ENCODE measurements at regions of chr2 and their contacts with region 1.

Region 1: GRCh38 chr2:111091811-111092211 is 28.9 kb upstream of the BCL2L11 start:
- DNase-seq: no peak
- ATAC-seq: no peak
- H3K4me3 ChIP-seq: no peak overlapping the region
- H3K27ac ChIP-seq: no peak overlapping the region
- H3K4me1 ChIP-seq: peaks cover 0 to 3% of the 10 kb centered on the region in 2 donors
- H3K27me3 ChIP-seq: no peaks in the 10 kb centered on the region
- CTCF ChIP-seq: no peak
- POLR2A ChIP-seq: no peak

Region 2: DNA sequence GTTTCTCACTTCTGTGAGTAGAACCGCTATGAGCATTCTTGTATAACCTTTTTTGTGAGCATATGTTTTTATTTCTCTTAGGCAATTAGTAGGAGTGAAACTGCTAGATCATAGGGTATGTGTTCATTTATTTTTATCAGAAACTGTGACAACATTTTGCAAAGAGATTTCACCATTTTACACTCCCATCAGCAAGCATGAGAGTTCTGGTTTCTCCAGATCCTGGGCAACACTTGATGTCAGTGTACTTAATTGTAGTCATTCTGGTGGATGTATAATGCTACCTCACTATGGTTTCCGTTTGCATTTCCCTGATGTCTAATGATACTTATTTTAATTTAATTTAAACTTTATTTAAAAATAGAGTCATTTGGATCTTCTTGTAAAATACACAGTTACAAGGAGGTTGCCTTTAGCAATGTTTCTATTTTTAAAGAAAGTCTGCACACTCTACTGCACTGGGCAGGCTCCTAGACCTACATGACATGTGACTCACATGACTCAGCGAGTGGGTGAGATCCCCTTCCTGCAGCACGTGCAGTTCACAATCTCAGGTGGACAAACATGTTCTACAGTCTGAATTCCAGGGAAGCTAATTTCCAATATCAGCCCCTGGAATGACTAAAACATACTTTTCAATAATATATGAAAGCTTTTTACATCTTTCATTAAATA is 98.1 kb before region 1 on chr2:
- in situ Hi-C with region 1: no loop called
- intact Hi-C with region 1: loop called (anchors 10 kb)
- DNase-seq: peak; percentile 36 to 63
- ATAC-seq: peak; percentile 96 to 99
- H3K4me3 ChIP-seq: no peak overlapping the region
- H3K27ac ChIP-seq: no peak overlapping the region
- H3K4me1 ChIP-seq: peaks cover 0 to 4% of the 10 kb centered on the region in 2 donors
- H3K27me3 ChIP-seq: no peaks in the 10 kb centered on the region
- CTCF ChIP-seq: no peak
- POLR2A ChIP-seq: no peak

Region 3: GRCh38 chr2:111054791-111055691 is 36.8 kb before region 1 on chr2:
- in situ Hi-C with region 1: no loop called
- intact Hi-C with region 1: no loop called
- DNase-seq: no peak
- ATAC-seq: no peak
- H3K4me3 ChIP-seq: no peak overlapping the region
- H3K27ac ChIP-seq: no peak overlapping the region
- H3K4me1 ChIP-seq: peaks cover 0 to 4% of the 10 kb centered on the region in 2 donors
- H3K27me3 ChIP-seq: no peaks in the 10 kb centered on the region
- CTCF ChIP-seq: no peak
- POLR2A ChIP-seq: no peak

Measured in gastrocnemius medialis (tissue), 4 donors.